HEK293 (cell line): ENCODE measurements at regions of chr1 and their contacts with region 1.

Region 1: GRCh38 chr1:108691942-108692723 is at the start of gene PRPF38B:
- H3K4me3 ChIP-seq: peak within 1 kb of the TSS; percentile 72
- H3K27ac ChIP-seq: peak within 1 kb of the TSS; percentile 81
- H3K4me1 ChIP-seq: 0 out of 2 replicates have a peak, but pooled peaks cover 3% of the 10 kb centered on the region
- CTCF ChIP-seq: no peak

Region 2: GRCh38 chr1:108703939-108704900 is 12.1 kb after region 1 on chr1:
- CTCF ChIA-PET with region 1: interaction called, 4 read pairs
- POLR2A ChIA-PET with region 1: interaction called, 33 read pairs
- H3K4me3 ChIP-seq: no peak overlapping the region
- H3K27ac ChIP-seq: no peak overlapping the region
- H3K4me1 ChIP-seq: no peaks in the 10 kb centered on the region
- CTCF ChIP-seq: no peak